WTC11 (cell line): ENCODE measurements at regions of chr6 and their contacts with region 1.

Region 1: DNA sequence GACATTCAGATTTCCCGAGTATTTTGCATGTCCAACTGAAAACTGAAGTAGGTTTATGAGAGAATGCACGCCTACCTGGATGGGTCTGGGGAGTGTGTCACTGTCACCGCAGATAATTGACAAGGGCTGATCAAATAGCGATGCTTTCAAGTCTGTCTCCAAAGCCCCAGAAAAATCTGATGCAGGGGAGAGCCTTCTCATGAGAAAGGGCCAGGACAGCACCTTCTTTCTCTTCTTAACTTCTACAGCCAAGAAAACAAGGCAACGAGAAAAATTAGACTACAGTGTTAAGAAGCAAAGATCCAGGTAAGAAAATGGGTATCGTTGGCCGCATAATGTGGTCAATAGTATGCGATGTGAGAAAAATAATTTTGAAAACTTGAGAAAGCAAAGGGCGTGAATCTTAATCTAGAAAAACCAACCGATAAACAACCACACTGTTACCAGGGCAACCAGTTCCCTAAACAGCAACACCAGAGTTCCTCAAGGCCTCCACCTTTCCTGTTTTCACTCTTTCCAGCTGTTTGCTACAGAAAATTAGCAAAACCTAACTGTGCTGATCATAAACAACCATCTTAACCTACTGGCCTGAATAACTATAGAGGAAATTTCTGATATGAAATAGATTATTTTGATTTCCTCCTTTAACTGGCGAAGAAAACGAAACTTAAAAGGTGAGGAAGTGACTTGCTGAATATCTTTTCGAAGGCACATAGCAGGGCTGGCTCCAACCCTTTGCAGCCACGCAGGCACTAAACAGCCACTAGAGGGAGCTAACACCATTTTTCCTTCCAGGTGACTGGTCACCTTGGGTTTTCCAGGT is 2.6 kb downstream of the TAGAP start:
- DNase-seq: peak; percentile 81
- ATAC-seq: peak; percentile 91
- H3K4me3 Mint-ChIP-seq: peak overlapping the region; percentile 46
- H3K27ac Mint-ChIP-seq: peak overlapping the region; percentile 92
- H3K4me1 Mint-ChIP-seq: peaks cover 29% of the 10 kb centered on the region
- H3K27me3 Mint-ChIP-seq: no peaks in the 10 kb centered on the region; the same call in 1 of the 2 replicates
- CTCF ChIP-seq: peak; percentile 81

Region 2: DNA sequence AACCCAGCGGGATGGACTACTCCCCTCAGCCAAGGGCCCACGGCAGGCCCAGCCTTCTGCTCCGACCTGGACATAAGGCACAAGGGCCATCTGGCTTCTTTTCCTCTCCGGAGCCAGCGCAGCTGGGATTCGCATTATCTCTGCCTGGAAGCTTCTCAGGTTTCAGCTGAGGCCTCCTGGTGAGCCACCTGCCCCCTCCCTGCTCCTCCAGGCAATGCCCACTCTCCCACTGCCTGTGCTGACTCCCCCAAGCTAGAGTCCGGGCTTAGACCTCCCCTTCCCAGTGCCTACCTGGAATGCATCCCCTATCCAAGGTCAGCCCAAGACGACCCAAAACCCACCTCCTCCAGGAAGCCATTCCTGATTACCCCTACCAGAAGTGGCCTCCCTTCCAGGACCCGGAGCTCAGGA is 283.8 kb before region 1 on chr6:
- CTCF ChIA-PET with region 1: no interaction called
- POLR2A ChIA-PET with region 1: no interaction called
- DNase-seq: peak; percentile 65
- ATAC-seq: peak; percentile 48
- H3K4me3 Mint-ChIP-seq: no peak overlapping the region
- H3K27ac Mint-ChIP-seq: no peak overlapping the region
- H3K4me1 Mint-ChIP-seq: peaks cover 43% of the 10 kb centered on the region
- H3K27me3 Mint-ChIP-seq: no peaks in the 10 kb centered on the region
- CTCF ChIP-seq: no peak

Region 3: GRCh38 chr6:158999666-159000403 is 42.4 kb before region 1 on chr6 and contains the start of gene RSPH3:
- CTCF ChIA-PET with region 1: interaction called, 11 read pairs
- POLR2A ChIA-PET with region 1: no interaction called
- DNase-seq: peak; percentile 98
- ATAC-seq: peak; percentile 91
- H3K4me3 Mint-ChIP-seq: peak within 1 kb of the TSS; percentile 95
- H3K27ac Mint-ChIP-seq: peak within 1 kb of the TSS; percentile 97
- H3K4me1 Mint-ChIP-seq: peaks cover 16% of the 10 kb centered on the region
- H3K27me3 Mint-ChIP-seq: no peaks in the 10 kb centered on the region
- CTCF ChIP-seq: no peak
- total RNA-seq, gene RSPH3: 2.4 to 3.2 TPM (median 2.7 TPM) in 3 replicates

Region 4: DNA sequence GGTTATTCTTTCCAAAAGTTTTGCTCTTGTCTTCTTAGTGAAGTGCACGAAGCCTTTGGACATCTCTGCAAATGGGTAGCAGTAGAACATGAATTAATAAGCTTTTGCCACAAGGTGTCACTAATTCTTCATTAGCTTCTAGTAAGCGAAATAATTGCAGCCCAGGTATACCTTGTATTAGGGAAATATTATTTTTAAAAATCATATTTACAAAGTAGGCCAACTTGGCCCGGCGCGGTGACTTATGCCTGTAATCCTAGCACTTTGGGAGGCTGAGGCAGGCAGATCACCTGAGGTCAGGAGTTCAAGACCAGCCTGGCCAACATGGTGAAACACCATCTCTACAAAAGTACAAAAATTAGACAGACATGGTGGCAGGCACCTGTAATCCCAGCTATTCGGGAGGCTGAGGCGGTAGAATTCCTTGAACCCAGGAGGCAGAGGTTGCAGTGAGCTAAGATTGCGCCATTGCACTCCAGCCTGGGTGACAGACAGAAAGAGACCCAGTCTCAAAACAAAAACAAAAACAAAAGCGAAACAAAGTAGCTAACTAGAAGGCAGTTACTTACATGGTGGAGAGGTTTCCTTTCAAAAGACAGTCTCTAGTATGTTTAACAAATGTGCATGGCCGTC is 33.4 kb before region 1 on chr6:
- CTCF ChIA-PET with region 1: interaction called, 13 read pairs
- POLR2A ChIA-PET with region 1: no interaction called
- DNase-seq: no peak
- ATAC-seq: 0 out of 2 replicates have a peak, but pooled peaks have one; percentile 41
- H3K4me3 Mint-ChIP-seq: no peak overlapping the region
- H3K27ac Mint-ChIP-seq: no peak overlapping the region
- H3K4me1 Mint-ChIP-seq: no peaks in the 10 kb centered on the region
- H3K27me3 Mint-ChIP-seq: no peaks in the 10 kb centered on the region
- CTCF ChIP-seq: no peak

Region 5: DNA sequence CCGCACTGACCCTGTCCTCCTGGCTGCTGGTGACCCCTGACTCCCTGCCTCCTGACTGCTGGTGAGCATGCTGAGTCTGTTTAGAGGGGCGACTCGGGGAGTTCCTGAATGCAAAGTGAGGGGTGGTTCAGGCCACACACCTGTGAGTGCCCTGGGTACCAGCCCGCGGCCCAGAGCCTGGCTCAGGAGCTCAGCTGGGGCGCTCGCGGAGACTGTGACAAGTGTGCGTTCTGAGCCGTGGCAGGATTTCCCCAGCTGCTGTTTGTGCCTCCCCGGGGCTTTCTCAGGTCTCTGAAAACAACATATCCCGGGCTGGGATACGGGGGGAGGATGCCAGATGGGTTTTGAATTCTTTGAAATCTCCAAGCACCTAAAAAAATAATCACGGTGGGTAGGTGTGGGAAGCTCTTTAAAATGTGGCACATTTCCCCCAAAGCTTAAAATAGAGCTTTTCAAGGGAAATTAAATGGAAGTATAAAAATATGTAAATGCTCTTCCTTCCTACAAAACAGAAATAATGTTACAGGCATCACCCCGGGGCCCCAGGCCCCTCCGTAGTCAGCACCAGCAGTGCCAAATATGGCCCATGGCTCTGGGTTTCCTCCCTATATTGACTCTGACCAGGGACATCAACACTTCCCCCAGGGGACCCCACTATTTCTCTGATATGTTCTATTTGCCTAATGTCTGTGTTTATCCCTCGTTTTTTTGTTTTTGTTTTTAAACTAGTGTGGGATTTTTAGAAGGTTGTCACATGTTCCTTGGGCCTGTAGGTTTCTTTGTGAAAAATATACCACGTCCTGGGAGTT is 52.4 kb after region 1 on chr6:
- CTCF ChIA-PET with region 1: interaction called, 10 read pairs
- POLR2A ChIA-PET with region 1: no interaction called
- DNase-seq: no peak
- ATAC-seq: no peak; the same call in 1 of the 2 replicates
- H3K4me3 Mint-ChIP-seq: no peak overlapping the region
- H3K27ac Mint-ChIP-seq: no peak overlapping the region
- H3K4me1 Mint-ChIP-seq: peaks cover 2% of the 10 kb centered on the region; the same call in 1 of the 2 replicates
- H3K27me3 Mint-ChIP-seq: no peaks in the 10 kb centered on the region
- CTCF ChIP-seq: no peak

Region 6: DNA sequence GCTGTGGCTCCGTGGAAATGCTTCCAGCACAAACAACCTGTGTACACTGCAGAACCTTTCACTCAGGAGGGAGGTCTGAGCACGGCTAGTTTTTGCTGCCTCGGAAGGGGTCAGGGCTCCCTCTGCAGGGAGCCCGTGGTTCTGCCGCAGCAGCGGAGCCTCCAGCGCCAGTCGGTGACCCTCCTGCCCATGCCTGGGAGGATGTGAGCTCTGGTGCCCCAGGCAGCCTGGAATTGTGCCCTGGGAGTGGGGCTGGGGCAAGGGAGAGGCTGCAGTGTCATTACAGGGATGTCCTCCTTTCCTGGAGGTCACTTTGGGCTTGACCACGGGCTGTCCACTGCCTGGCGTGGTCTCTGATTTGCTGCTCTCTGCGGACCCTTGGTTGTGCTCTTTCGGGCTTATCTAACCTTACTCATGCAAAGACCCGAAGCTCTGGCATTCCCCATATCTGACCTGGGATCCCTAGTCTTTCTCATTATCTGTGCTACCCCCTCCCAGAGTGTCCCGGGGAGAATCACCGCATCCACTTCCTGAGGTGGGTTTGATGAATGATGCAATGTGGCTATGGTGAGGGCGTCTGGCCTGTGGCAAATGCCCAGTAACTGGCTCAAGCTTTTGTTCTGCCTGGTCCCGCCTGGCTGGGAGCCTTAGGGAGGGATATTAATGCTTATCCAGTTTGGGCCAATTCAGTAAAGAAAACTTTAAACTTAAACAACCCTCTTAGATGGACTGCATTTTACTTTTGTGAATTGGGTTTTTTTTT is 62.1 kb after region 1 on chr6:
- CTCF ChIA-PET with region 1: interaction called, 65 read pairs
- POLR2A ChIA-PET with region 1: no interaction called
- DNase-seq: peak; percentile 79
- ATAC-seq: peak; percentile 90
- H3K4me3 Mint-ChIP-seq: no peak overlapping the region
- H3K27ac Mint-ChIP-seq: no peak overlapping the region
- H3K4me1 Mint-ChIP-seq: peaks cover 31% of the 10 kb centered on the region
- H3K27me3 Mint-ChIP-seq: no peaks in the 10 kb centered on the region
- CTCF ChIP-seq: peak; percentile 84

Region 7: GRCh38 chr6:159110013-159110412 is 67.8 kb after region 1 on chr6:
- CTCF ChIA-PET with region 1: interaction called, 65 read pairs
- POLR2A ChIA-PET with region 1: no interaction called
- DNase-seq: peak; percentile 63
- ATAC-seq: peak; percentile 76
- H3K4me3 Mint-ChIP-seq: no peak overlapping the region
- H3K27ac Mint-ChIP-seq: no peak overlapping the region
- H3K4me1 Mint-ChIP-seq: peaks cover 18% of the 10 kb centered on the region
- H3K27me3 Mint-ChIP-seq: no peaks in the 10 kb centered on the region
- CTCF ChIP-seq: peak; percentile 89

Region 8: DNA sequence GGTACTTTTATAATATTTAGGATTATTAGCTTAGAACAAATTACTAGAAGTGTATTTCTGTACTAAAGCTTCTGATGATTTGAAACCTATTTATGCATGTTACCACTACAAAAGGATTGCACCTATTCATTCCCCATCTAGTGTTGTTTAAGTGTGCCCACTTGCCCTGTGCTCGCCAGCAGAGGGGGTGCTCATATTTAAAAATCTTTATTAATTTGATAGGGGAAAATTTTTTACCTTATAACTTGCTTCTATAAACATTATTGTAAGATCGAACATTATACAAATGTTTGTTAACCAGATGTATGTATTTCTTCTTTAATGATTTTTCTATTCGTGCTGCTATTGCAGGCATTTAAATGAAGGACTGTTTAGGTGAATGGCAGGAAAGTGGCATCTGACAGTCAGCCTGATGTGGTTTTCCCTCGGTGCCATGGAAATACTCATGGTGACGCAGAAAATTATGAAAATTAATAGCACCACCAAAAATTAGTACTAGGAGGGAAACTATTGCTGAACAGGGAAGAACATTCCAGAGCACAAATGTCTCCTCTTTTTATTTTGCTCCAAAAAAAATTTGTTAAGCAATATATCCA is 82.9 kb after region 1 on chr6:
- CTCF ChIA-PET with region 1: interaction called, 13 read pairs
- POLR2A ChIA-PET with region 1: no interaction called
- DNase-seq: no peak
- ATAC-seq: no peak
- H3K4me3 Mint-ChIP-seq: no peak overlapping the region
- H3K27ac Mint-ChIP-seq: no peak overlapping the region
- H3K4me1 Mint-ChIP-seq: no peaks in the 10 kb centered on the region
- H3K27me3 Mint-ChIP-seq: peaks cover 5% of the 10 kb centered on the region; the same call in 1 of the 2 replicates
- CTCF ChIP-seq: no peak